Posterior vena cava (tissue), 2 donors: ENCODE measurements at regions of chr6 and their contacts with region 1.

Region 1: DNA sequence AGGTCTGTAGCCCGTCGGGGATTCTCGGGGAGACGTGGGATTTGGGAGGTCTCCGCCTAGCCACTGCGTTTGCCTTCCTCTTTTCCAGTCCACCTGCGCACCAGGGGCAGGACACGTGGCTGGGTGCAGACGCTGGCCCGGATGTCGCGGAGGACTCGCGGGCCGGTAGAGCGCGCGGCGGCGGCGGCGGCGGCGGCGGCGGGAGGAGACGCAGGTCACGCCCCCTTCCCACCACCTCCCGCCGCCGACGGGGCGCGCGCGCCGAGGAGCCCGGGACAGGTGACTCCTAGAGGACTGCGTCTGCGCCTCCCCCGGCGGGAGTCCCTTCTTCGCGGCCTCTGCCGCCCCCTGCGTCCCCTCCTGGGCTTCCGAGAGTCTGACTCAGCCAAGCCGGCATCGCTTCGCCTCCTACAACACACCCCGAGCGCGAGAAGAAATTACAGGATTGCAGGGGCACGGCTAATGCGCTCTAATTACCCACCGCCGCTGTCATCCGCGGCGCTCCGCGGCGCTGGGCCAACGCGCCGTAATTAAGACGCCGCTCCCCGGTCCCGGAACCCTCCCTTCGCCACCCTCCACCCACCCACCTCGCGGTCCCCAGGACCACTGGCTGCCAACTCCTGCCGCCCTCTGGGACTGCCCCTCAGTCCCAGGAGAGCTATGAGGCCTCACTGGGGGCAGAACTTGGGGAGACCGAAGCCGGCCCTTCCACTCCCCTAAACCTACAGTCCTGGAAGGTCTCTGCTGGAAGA is 124.5 kb downstream of the MRPL14 start:
- DNase-seq: peak; percentile 86

Region 2: DNA sequence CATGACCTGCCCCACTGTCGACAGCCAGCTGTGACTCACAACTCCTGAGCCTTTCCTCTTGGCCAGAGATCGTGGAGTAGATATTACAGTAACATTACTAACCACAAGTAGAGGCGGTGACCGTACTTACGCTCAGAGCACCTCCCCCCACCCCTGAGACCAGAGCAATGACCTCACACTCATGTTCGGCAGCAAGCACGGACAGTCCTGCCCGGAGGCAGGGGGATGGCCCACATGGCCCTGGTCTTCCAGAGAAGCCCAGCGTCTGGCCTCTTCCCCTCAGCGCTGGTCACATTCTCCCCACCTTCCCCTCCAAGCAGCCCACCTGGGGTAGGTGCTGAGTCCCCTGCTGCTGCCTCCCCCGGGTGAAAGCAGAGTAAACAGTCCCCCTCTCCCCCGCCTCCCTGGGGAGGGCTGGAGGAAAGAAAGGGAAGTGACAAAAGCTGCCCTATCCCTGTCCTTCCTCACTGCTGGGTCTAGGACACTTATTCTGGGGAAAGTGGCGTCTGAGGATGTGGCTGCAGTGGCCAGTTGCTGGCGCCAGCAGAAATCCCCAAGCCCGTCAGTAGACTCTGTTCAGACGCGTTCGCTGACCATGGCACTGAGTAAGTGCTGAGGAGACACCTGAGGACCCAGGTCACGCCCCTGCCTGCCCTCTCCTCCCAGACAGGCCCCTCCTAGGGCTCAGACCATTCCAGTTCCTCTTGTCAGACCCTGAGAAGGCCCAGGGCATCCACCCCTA is 56.0 kb after region 1 on chr6:
- intact Hi-C with region 1: loop called in 1 of 2 experiments (anchors 5 kb)
- DNase-seq: peak; percentile 97

Region 3: DNA sequence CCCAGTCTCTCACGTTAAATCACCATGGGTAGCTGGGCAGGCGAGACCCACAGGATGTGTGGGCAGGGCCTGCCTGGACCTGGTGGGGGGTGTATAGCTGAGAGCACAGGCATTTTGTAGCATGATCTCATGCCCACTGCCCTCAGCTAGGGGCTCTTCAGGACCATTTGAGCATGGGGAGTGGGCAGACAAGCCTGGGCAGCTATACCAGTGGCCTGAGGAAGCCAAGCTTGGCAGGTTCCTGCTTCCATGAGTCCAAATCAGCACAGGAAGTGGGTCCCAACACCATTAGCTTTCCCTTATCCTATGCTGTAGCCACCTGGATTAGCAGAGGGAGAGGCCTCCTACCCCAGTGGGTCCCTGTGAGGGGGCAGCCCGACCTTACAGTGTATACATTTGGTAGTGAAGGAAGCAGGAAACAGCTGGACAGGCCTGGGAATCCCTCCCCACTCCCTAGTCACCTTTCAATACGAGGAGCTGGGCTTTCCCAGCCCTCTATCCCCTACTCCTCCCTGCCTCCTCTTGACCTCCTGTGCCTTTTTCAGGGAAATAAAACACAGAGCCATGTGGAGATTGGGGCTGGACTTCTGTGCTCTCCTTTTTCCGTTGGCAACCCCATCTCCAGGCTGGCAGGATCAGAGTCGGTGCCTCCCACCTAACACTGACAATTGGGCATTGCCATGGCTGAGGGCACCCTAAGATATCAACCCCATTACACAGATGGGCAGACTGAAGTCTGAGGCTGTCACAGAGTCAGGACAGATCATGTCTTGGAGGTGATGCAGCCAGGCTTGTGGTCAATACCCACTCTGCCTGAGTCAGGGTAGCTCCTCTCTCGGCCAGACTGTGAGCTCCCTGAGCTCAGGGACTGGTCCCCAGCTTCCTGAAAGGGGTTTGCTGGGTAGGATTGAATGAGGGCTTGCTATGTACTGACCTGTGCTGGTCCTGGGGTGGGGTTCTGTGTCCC is 64.7 kb after region 1 on chr6:
- intact Hi-C with region 1: loop called in 1 of 2 experiments (anchors 5 kb)
- DNase-seq: no peak

Region 4: GRCh38 chr6:44381739-44382138 is 379.0 kb after region 1 on chr6:
- intact Hi-C with region 1: loop called in 1 of 2 experiments (anchors 5 kb)
- DNase-seq: no peak